Adrenal gland (tissue), 19 donors: ENCODE measurements at regions of chr6 and their contacts with region 1.

Region 1: DNA sequence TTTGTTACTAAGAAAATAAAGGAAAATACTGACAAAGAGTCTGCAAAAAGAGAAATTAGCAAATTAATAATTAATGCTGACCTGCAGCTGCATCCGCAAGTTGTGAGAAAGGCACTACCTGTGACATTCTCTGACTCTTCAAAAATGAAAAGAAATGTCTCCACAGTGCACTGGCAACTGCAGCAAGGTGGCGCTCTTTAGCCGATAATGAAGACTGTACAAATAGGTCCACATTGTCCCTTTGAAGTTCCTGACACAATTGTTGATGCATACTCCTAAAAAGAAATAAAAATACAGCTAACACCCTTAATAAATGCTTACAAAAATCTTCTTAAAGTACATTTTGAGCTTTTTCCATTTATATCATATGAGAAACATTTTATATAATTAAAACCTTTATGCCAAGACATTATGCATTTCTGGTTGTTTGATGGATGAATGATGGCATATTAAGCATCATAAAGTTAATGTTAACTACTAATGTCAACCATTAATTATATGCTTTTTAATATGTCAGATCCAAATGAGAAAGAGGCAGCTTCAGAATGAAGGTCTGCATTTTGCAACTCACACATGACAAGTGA is 96.5 kb downstream of the MMS22L start:
- DNase-seq: peak; percentile 54 to 89 (median 69)
- H3K4me3 ChIP-seq: no peak overlapping the region
- H3K27ac ChIP-seq: no peak overlapping the region
- H3K4me1 ChIP-seq: no peaks in the 10 kb centered on the region
- H3K27me3 ChIP-seq: no peaks in the 10 kb centered on the region
- CTCF ChIP-seq: peak; percentile 63 to 90 (median 73)
- POLR2A ChIP-seq: no peak

Region 2: GRCh38 chr6:97394160-97394748 is 207.7 kb after region 1 on chr6:
- intact Hi-C with region 1: loop called in 1 of 2 experiments (anchors 10 kb)
- DNase-seq: peak; percentile 26 to 68 (median 39)
- H3K4me3 ChIP-seq: no peak overlapping the region
- H3K27ac ChIP-seq: no peak overlapping the region
- H3K4me1 ChIP-seq: no peaks in the 10 kb centered on the region
- H3K27me3 ChIP-seq: no peaks in the 10 kb centered on the region
- CTCF ChIP-seq: peak; percentile 69 to 96 (median 89)
- POLR2A ChIP-seq: no peak